Astrocyte of the cerebellum (primary cell): ENCODE measurements at regions of chr19 and their contacts with region 1.

Region 1: GRCh38 chr19:4415352-4415751 is 12.9 kb downstream of the CHAF1A start:
- DNase-seq: no peak
- H3K4me3 ChIP-seq: no peak overlapping the region
- CTCF ChIP-seq: no peak

Region 2: GRCh38 chr19:4241824-4242430 is 173.4 kb before region 1 on chr19:
- in situ Hi-C with region 1: no loop called
- DNase-seq: no peak
- H3K4me3 ChIP-seq: no peak overlapping the region
- CTCF ChIP-seq: no peak

Region 3: DNA sequence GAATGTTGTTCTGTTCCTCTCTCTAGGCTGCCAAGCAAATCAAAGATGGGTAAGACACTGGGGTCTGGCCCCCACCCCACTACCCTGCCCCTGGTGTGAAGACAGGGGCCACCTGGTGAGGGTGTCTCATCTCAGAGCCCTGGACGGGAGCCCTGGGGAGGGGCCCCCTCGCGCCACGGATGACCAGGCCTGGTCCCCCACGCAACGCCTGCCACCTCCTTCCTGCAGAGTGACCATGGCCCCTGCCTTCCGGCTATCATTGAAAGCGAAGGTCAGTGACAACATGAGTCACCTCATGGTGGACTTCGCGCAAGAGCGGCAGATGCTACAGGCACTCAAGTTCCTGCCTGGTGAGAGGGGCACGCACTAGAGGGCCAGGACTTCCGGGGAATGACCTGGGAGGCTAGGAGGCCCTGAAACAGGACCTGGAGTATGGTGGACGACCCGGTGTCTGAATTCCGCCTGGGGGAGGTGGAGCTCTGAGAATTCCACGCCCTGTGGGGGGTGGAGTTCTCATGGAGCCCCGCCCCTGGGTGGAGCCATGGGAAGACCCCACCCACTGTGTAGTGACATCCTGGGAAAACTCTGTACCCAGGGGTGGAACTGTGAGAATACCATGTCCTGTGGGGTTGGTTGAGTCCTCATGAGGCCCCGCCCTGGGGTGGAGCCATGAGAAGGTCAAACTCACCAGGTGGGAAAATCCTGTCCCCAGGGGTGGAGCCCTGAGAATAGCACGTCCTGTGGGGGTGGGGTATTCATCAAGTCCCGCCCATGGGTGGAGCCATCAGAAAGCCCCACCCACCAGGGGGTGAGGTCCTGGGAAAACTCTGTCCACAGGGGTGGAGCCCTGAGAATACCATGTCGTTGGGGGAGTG is 104.9 kb before region 1 on chr19:
- in situ Hi-C with region 1: no loop called
- DNase-seq: no peak
- H3K4me3 ChIP-seq: no peak overlapping the region
- CTCF ChIP-seq: no peak

Region 4: GRCh38 chr19:4369888-4370260 is 45.5 kb before region 1 on chr19:
- in situ Hi-C with region 1: loop called (anchors 5 kb)
- DNase-seq: no peak
- H3K4me3 ChIP-seq: no peak overlapping the region
- CTCF ChIP-seq: peak; percentile 31

Region 5: DNA sequence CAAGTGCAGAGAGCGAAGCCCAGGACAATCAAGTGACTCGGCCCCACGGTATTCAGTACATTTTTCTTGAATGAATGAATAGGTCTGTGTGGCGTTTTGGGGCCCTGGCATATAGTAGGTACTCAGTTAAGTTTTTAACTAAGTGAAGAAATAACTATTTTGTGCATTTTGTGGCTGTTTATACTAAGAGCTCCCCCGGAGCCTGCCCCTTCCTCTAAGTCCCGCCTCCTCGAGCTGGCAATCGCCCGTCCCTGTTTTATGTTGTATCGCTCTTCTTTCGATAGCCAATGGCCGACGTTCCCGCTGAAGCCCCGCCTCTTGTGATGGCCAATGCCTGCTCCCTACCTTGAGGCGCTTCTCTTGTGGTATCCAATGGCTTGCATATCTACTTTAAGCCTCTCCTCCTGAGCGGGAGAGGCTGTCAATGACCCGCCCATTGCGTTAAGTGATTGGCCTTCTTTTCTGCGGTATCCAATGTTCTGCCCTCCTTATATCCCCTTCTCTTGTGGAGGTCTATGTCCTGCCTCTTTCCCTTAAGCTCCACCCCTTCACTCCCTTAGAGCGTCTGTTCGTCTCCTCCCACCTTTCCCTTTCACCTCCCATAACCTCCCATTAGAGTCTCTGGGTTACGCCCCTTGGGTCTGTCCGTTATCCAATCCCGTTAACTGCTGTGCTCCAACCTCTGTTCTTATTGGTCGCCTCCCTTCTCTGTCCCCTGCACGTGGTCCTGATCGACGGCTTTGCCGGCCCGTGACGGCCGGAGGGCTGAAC is 56.2 kb after region 1 on chr19:
- in situ Hi-C with region 1: no loop called
- DNase-seq: peak; percentile 100
- H3K4me3 ChIP-seq: peak overlapping the region; percentile 57
- CTCF ChIP-seq: no peak

Region 6: GRCh38 chr19:4493104-4493912 is 78.0 kb after region 1 on chr19:
- in situ Hi-C with region 1: no loop called
- DNase-seq: no peak
- H3K4me3 ChIP-seq: no peak overlapping the region
- CTCF ChIP-seq: no peak